Mammary epithelial cell (primary cell): ENCODE measurements at regions of chr10 and their contacts with region 1.

Region 1: DNA sequence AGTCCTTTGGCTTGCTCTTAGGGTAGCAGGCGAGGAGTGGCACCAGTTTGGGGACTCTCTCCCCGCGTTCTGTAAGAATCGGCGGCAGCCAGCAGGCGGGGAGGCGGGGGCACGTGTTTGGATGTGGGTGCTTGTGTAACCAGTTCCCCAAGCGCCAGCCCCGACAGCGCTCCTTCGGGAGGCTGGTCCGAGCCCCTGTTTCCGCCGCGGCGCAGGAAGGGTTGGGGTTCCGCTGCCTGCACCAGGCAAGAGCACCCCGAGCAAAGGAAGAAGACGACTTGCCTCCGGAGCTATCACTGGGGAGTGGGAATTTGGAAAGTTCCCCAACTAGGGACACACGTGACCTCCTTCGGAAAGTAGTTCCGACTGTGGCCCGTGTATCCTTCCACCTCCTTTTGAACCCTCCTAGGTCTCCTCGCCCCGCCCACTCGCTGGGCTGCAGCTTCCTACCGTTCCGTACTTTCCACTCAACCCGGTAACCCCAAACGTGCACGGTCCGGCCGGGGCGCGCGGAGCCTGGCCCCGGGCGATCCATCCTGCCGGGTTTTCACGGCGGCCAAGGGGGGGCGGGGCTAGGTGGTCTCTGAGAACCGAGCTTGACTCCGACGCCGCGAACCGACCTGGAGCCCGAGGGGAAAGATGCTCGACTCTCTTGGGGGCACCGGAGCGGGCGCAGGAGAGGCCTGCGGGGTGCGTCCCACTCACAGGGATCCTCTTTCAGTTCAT is 1.2 kb downstream of the KLLN start:
- DNase-seq: peak; percentile 96
- H3K4me3 ChIP-seq: peak overlapping the region; percentile 51 to 77 (median 68)
- H3K27ac ChIP-seq: peak overlapping the region; percentile 69
- H3K4me1 ChIP-seq: peaks cover 12% of the 10 kb centered on the region
- H3K27me3 ChIP-seq: no peaks in the 10 kb centered on the region
- CTCF ChIP-seq: no peak

Region 2: DNA sequence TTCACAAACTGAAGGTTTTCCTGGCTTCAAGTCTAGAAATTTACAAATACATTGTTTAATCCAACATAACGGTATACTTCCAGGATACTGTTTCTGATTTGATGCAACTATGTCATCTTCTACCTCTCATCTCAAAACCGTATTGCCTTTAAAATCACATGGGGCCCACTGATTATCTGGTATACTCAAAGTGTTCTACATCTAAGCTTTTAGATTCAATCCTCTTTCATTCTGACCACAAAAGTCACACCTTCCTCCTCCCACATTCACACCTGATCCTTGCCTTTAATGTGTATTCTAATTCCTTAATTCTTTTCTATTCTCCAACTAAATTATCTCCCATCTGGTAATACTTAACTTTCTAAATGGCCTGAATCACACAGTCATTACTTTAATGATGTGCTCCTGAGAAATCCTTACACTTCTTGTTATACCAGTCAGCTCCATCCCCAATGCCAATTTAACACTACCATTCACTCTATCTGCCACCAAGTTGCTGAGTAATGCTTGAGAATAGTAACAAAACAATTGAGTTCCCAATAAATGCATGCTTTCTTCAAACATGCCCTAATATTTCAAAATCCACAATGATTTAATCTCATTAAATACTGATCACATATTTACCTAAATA is 57.1 kb before region 1 on chr10:
- CTCF ChIA-PET with region 1: no interaction called
- dilution Hi-C with region 1: no loop called
- in situ Hi-C with region 1: no loop called
- intact Hi-C with region 1: no loop called
- DNase-seq: no peak
- H3K4me3 ChIP-seq: no peak overlapping the region
- H3K27ac ChIP-seq: no peak overlapping the region
- H3K4me1 ChIP-seq: no peaks in the 10 kb centered on the region
- H3K27me3 ChIP-seq: no peaks in the 10 kb centered on the region
- CTCF ChIP-seq: no peak

Region 3: GRCh38 chr10:87817609-87818504 is 44.3 kb before region 1 on chr10 and contains the start of gene ATAD1:
- CTCF ChIA-PET with region 1: no interaction called
- dilution Hi-C with region 1: no loop called
- in situ Hi-C with region 1: no loop called
- intact Hi-C with region 1: loop called (anchors 1 kb)
- DNase-seq: peak; percentile 90
- H3K4me3 ChIP-seq: peak within 1 kb of the TSS; percentile 67 to 85 (median 83)
- H3K27ac ChIP-seq: peak within 1 kb of the TSS; percentile 77
- H3K4me1 ChIP-seq: peaks cover 5% of the 10 kb centered on the region
- H3K27me3 ChIP-seq: no peaks in the 10 kb centered on the region
- CTCF ChIP-seq: peak in 1 of 2 donors; percentile 41
- total RNA-seq, gene ATAD1: 57.5 to 73.7 TPM

Region 4: DNA sequence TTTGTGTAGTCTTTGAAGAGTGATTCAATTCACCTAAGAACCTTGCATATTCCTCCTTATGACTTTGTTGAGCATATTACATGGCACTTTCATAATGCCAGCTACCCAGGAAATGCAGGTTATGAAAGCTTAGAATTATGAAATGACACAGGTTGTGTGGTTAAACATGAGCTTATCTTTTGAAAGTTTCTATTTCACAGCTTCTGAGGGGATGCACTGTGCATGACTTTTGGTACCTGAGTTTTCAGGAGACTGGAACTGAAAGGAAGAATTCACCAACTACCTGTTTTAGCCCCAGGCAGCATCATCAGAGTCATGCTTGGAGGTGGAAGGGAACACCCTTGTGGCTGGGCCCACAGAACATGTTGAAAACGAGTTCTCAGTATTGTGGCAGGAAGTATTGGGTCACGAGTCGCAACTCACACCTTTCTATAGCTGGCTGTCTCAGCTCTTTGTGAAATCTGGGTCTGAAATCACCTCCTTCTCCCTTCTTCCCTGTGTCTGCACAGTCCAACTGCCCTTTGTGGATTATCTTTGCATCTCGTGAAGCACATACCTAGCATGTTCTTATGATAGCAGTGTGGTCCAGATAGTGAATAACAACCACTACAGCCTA is 229.5 kb after region 1 on chr10:
- CTCF ChIA-PET with region 1: no interaction called
- dilution Hi-C with region 1: no loop called
- in situ Hi-C with region 1: no loop called
- intact Hi-C with region 1: loop called (anchors 1 kb)
- DNase-seq: peak; percentile 95
- H3K4me3 ChIP-seq: no peak overlapping the region
- H3K27ac ChIP-seq: peak overlapping the region; percentile 12
- H3K4me1 ChIP-seq: peaks cover 58% of the 10 kb centered on the region
- H3K27me3 ChIP-seq: no peaks in the 10 kb centered on the region
- CTCF ChIP-seq: peak in 1 of 2 donors; percentile 38

Region 5: GRCh38 chr10:88131511-88132154 is 269.5 kb after region 1 on chr10:
- CTCF ChIA-PET with region 1: no interaction called
- dilution Hi-C with region 1: no loop called
- in situ Hi-C with region 1: no loop called
- intact Hi-C with region 1: loop called (anchors 1 kb)
- DNase-seq: peak; percentile 93
- H3K4me3 ChIP-seq: no peak overlapping the region
- H3K27ac ChIP-seq: peak overlapping the region; percentile 43
- H3K4me1 ChIP-seq: peaks cover 18% of the 10 kb centered on the region
- H3K27me3 ChIP-seq: no peaks in the 10 kb centered on the region
- CTCF ChIP-seq: peak; percentile 46 to 72

Region 6: GRCh38 chr10:88318803-88319202 is 456.7 kb after region 1 on chr10:
- CTCF ChIA-PET with region 1: no interaction called
- dilution Hi-C with region 1: no loop called
- in situ Hi-C with region 1: no loop called
- intact Hi-C with region 1: loop called (anchors 1 kb)
- DNase-seq: peak; percentile 15
- H3K4me3 ChIP-seq: no peak overlapping the region
- H3K27ac ChIP-seq: no peak overlapping the region
- H3K4me1 ChIP-seq: no peaks in the 10 kb centered on the region
- H3K27me3 ChIP-seq: no peaks in the 10 kb centered on the region
- CTCF ChIP-seq: peak; percentile 32 to 47

Region 7: GRCh38 chr10:88473989-88474883 is 612.1 kb after region 1 on chr10:
- CTCF ChIA-PET with region 1: no interaction called
- dilution Hi-C with region 1: no loop called
- in situ Hi-C with region 1: no loop called
- intact Hi-C with region 1: loop called (anchors 5 kb)
- DNase-seq: peak; percentile 97
- H3K4me3 ChIP-seq: no peak overlapping the region
- H3K27ac ChIP-seq: peak overlapping the region; percentile 87
- H3K4me1 ChIP-seq: peaks cover 51% of the 10 kb centered on the region
- H3K27me3 ChIP-seq: no peaks in the 10 kb centered on the region
- CTCF ChIP-seq: no peak